Activated CD4-positive, alpha-beta T cell treated with anti-CD3 and anti-CD28 coated beads for 36 hours (primary cell): ENCODE measurements at regions of chr2 and their contacts with region 1.

Region 1: DNA sequence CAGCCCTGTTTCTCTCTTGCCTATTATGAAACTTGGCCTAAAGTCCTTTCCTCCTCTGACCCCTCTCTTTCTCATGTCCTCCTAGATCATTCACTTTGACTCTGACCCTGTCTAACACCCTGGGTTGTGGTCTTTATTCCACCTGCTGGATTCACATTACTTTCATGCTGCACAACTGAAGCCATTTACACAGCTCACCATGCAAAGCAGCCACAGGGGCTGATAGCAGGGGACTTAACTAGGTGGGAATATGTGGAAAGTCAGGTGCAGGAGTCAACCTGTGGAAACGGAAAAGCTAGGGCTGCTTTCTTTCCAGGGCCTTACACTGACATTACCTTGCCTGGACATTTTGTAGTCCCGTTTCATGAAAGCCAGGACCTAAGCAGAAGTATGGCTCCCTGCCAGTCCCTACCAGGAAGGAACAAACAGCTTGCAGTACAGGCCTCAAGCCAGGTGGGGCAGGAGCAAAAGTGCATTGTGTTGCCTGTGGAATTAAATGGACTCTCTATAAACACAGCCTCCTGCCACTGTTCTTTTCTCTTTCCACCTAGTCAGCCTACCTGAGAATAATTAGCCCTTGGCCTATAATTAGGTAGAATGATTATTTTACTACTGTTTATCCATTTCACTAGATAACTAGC is 11.8 kb downstream of the MAPRE3 start:
- DNase-seq: peak; percentile 42
- ATAC-seq: peak; percentile 57
- H3K4me3 Mint-ChIP-seq: no peak overlapping the region
- H3K27ac Mint-ChIP-seq: no peak overlapping the region
- H3K4me1 Mint-ChIP-seq: no peaks in the 10 kb centered on the region
- H3K27me3 Mint-ChIP-seq: no peaks in the 10 kb centered on the region

Region 2: GRCh38 chr2:26993768-26994167 is 11.5 kb after region 1 on chr2:
- CTCF ChIA-PET with region 1: interaction called, 11 read pairs
- POLR2A ChIA-PET with region 1: no interaction called
- intact Hi-C with region 1: no loop called
- DNase-seq: no peak
- ATAC-seq: no peak
- H3K4me3 Mint-ChIP-seq: no peak overlapping the region
- H3K27ac Mint-ChIP-seq: no peak overlapping the region
- H3K4me1 Mint-ChIP-seq: no peaks in the 10 kb centered on the region
- H3K27me3 Mint-ChIP-seq: peaks cover under 1% of the 10 kb centered on the region

Region 3: DNA sequence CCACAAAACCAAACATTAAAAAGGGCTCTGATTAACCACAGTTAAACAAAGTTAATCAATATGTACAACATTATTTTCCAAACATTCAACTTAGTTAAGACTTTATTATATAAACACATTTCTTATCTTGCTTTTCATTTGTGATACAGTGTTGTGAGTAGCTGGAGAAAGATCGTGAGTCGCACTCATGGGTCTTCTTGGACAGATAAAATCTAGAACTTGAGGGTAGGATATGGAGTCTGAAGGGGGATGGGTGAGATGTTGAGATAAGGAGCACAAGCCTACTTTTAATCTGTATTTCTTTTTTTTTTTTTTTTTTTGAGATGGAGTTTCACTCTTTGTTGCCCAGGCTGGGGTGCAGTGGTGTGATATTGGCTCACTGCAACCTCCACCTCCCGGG is 27.9 kb after region 1 on chr2:
- CTCF ChIA-PET with region 1: interaction called, 12 read pairs
- POLR2A ChIA-PET with region 1: no interaction called
- intact Hi-C with region 1: no loop called
- DNase-seq: no peak
- ATAC-seq: no peak
- H3K4me3 Mint-ChIP-seq: no peak overlapping the region
- H3K27ac Mint-ChIP-seq: no peak overlapping the region
- H3K4me1 Mint-ChIP-seq: no peaks in the 10 kb centered on the region
- H3K27me3 Mint-ChIP-seq: no peaks in the 10 kb centered on the region